Sciatic nerve (tissue), 2 donors: ENCODE measurements at regions of chr11 and their contacts with region 1.

Region 1: DNA sequence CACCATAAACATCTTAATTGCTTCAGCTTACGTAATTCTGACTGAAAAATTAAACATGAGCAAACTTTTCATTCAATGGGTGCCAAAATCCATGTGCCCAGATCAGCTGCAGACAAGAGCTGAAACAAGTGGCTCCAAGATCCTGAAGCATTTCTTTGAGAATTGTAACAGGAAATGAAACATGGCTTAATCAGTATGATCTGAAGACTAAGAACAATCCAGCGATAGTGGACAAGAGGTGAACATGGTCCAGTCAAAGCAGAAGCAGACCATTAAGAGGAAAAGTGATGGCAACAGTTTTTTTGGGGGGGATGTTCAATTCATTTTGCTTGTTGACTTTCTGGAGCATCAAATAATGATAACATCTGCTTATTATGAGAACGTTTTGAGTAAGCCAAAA is 1964.5 kb upstream of the RAG2 start:
- DNase-seq: no peak
- ATAC-seq: no peak

Region 2: DNA sequence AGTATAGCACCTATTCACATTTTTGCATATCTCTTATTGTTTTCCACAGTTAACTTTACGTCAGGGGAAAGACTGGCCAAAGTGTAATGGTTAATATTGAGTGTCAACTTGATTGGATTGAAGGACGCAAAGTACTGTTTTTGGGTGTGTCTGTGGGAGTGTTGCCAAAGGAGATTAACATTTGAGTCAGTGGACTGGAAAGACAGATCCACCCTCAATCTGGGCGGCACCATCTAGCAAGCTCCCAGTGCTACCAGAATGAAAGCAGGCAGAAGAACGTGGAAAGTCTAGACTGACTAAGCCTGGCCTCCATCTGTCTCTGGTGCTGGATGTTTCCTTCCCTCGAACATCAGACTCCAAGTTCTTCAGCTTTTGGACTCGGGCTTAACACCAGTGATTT is 63.8 kb before region 1 on chr11:
- intact Hi-C with region 1: no loop called
- DNase-seq: no peak
- ATAC-seq: no peak

Region 3: DNA sequence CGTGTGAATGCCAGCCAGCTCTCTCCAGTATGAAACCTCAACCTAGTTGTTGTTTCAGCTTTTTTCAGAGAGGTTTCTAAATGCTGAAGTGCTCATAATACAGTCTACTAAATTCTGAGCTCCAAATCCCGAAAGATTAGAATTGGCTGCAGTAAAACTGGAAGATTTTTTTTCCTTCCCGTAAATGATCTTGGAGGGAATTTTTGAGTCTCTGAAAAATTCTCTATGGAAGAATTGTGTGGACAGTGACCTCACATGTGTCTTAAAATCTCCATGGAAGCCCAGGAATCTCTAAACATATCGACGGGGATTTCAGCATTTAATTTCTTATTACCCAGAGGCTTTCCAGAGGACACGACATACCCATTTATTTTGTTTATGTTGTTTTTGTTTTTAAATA is 1397.6 kb after region 1 on chr11:
- intact Hi-C with region 1: no loop called
- DNase-seq: no peak
- ATAC-seq: peak; percentile 36

Region 4: GRCh38 chr11:40306938-40307548 is 1744.5 kb after region 1 on chr11:
- intact Hi-C with region 1: loop called (anchors 5 kb)
- DNase-seq: no peak
- ATAC-seq: no peak